ENCODE measurements at regions of chr12 and their contacts with region 1.

Region 1: DNA sequence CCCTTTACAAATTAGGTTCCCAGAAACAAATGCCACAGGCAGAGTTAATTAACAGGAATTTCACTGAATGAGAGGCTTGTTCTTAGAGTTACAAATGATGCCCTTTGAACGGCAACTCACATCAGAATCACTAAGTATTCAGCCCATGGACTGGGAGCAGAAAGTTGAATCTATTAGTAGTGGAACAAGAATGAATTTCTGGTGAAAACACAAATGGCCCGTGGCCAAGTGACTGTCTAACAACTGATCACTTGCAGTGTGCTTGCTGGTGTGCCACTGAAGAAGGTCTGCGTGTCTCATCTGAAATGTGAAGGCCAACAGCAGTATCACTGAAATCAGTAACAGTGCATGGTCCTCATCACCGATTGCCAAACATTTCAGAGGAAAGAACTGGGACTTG is 893.4 kb upstream of the TMEM132C start:
- DNase-seq: no peak
- H3K4me3 ChIP-seq: no peak overlapping the region
- H3K27ac ChIP-seq: no peak overlapping the region
- H3K4me1 ChIP-seq: no peaks in the 10 kb centered on the region
- H3K27me3 ChIP-seq: no peaks in the 10 kb centered on the region
- CTCF ChIP-seq: no peak

Region 2: GRCh38 chr12:126784328-126784921 is 589.1 kb before region 1 on chr12:
- CTCF ChIA-PET with region 1: no interaction called
- dilution Hi-C with region 1: loop called (anchors 10 kb)
- in situ Hi-C with region 1: no loop called
- intact Hi-C with region 1: loop called (anchors 5 kb)
- DNase-seq: peak; percentile 14
- H3K4me3 ChIP-seq: no peak overlapping the region
- H3K27ac ChIP-seq: no peak overlapping the region
- H3K4me1 ChIP-seq: no peaks in the 10 kb centered on the region
- H3K27me3 ChIP-seq: no peaks in the 10 kb centered on the region
- CTCF ChIP-seq: peak; percentile 39 to 48

Region 3: GRCh38 chr12:127386723-127387122 is 13.2 kb after region 1 on chr12:
- CTCF ChIA-PET with region 1: no interaction called
- dilution Hi-C with region 1: no loop called
- in situ Hi-C with region 1: no loop called
- intact Hi-C with region 1: no loop called
- DNase-seq: peak; percentile 20
- H3K4me3 ChIP-seq: no peak overlapping the region
- H3K27ac ChIP-seq: no peak overlapping the region
- H3K4me1 ChIP-seq: peaks cover 20% of the 10 kb centered on the region
- H3K27me3 ChIP-seq: no peaks in the 10 kb centered on the region
- CTCF ChIP-seq: no peak

Measured in mammary epithelial cell (primary cell).